HCT116 (cell line): ENCODE measurements at regions of chr6 and their contacts with region 1.

Region 1: GRCh38 chr6:158072083-158072721 is 90.5 kb downstream of the SYNJ2 start:
- DNase-seq: no peak
- ATAC-seq: peak; percentile 44
- H3K4me3 ChIP-seq: no peak overlapping the region
- H3K27ac ChIP-seq: no peak overlapping the region
- H3K4me1 ChIP-seq: peaks cover 26 to 43% of the 10 kb centered on the region in 2 experiments
- H3K27me3 ChIP-seq: no peaks in the 10 kb centered on the region
- CTCF ChIP-seq: peak; percentile 75 to 87 (median 87)
- POLR2A ChIP-seq: no peak
- RAD21 ChIP-seq: peak; percentile 98

Region 2: GRCh38 chr6:157644043-157644810 is 428.0 kb before region 1 on chr6:
- CTCF ChIA-PET with region 1: no interaction called
- POLR2A ChIA-PET with region 1: no interaction called
- RAD21 ChIA-PET with region 1: no interaction called
- intact Hi-C with region 1: loop called (anchors 10 kb)
- DNase-seq: no peak
- ATAC-seq: peak; percentile 78
- H3K4me3 ChIP-seq: no peak overlapping the region
- H3K27ac ChIP-seq: no peak overlapping the region
- H3K4me1 ChIP-seq: peaks cover 7 to 9% of the 10 kb centered on the region in 2 experiments; a peak in 3 of 4 replicates
- H3K27me3 ChIP-seq: no peaks in the 10 kb centered on the region
- CTCF ChIP-seq: peak; percentile 31 to 49 (median 42); a peak in 5 of 6 replicates
- POLR2A ChIP-seq: no peak
- RAD21 ChIP-seq: peak; percentile 75

Region 3: GRCh38 chr6:157764178-157765033 is 307.8 kb before region 1 on chr6:
- CTCF ChIA-PET with region 1: interaction called, 4 read pairs
- POLR2A ChIA-PET with region 1: no interaction called
- RAD21 ChIA-PET with region 1: no interaction called
- intact Hi-C with region 1: loop called (anchors 2 kb)
- DNase-seq: peak; percentile 91
- ATAC-seq: peak; percentile 75
- H3K4me3 ChIP-seq: peak overlapping the region in 1 of 2 experiments; percentile 17; a peak in 2 of 4 replicates
- H3K27ac ChIP-seq: peak overlapping the region; percentile 43
- H3K4me1 ChIP-seq: peaks cover 48 to 63% of the 10 kb centered on the region in 2 experiments
- H3K27me3 ChIP-seq: no peaks in the 10 kb centered on the region
- CTCF ChIP-seq: no peak
- POLR2A ChIP-seq: no peak
- RAD21 ChIP-seq: no peak

Region 4: GRCh38 chr6:157928428-157928827 is 143.8 kb before region 1 on chr6:
- CTCF ChIA-PET with region 1: no interaction called
- POLR2A ChIA-PET with region 1: no interaction called
- RAD21 ChIA-PET with region 1: no interaction called
- intact Hi-C with region 1: no loop called
- DNase-seq: no peak
- ATAC-seq: no peak
- H3K4me3 ChIP-seq: no peak overlapping the region
- H3K27ac ChIP-seq: no peak overlapping the region
- H3K4me1 ChIP-seq: no peaks in the 10 kb centered on the region
- H3K27me3 ChIP-seq: no peaks in the 10 kb centered on the region
- CTCF ChIP-seq: no peak
- POLR2A ChIP-seq: no peak
- RAD21 ChIP-seq: no peak

Region 5: DNA sequence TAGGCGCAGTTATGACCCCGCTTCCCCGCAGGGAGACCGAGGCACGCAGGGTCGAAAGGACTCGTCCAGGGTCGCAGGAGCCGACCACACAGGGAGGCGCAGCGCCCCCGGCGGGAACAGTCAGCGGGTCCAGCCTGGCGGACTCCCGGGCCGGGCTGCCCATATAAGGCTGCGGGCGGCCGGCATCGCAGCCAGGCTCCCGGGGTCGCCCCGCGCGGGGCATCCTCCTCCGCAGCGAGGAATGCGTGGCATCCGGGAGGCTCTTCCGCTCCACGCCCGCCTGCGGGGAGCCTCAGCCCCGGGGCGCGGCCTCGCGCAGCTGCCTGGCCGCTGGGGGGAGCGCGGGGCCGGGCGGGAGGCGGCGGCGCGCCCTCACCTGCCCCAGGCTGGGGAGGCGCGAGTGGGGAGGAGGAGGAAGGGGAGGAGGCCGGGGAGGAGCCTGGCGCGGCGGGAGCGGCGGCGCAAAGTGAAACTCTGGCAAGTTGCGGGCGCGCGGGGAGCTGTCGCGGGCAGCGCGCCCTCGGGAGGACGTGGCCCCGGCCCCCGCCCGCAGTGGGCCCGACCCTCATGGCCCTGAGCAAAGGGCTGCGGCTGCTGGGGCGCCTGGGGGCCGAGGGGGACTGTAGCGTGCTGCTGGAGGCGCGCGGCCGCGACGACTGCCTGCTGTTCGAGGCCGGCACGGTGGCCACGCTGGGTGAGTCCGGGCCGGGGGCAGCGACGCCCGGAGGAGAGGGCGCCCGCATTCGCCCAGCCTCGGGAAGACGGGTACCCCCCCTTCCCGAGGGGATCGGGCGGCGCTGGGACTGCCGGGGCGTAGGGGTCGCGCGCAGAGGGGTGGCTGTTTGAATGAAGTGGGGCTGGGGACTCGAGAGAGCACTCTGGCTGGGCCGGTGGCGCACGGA is 90.6 kb before region 1 on chr6 and contains the start of gene SYNJ2:
- CTCF ChIA-PET with region 1: interaction called, 5 read pairs
- POLR2A ChIA-PET with region 1: no interaction called
- RAD21 ChIA-PET with region 1: interaction called in 1 of 2 experiments, 3 read pairs
- intact Hi-C with region 1: loop called (anchors 1 kb)
- DNase-seq: no peak
- ATAC-seq: peak; percentile 94
- H3K4me3 ChIP-seq: peak within 1 kb of the TSS; percentile 63 to 76
- H3K27ac ChIP-seq: peak within 1 kb of the TSS; percentile 55; the same call in 1 of the 2 replicates
- H3K4me1 ChIP-seq: peaks cover 15 to 47% of the 10 kb centered on the region in 2 experiments; a peak in 3 of 4 replicates
- H3K27me3 ChIP-seq: no peaks in the 10 kb centered on the region
- CTCF ChIP-seq: peak; percentile 25 to 56 (median 48); a peak in 4 of 6 replicates
- POLR2A ChIP-seq: no peak
- RAD21 ChIP-seq: peak; percentile 46; the same call in 1 of the 2 replicates
- total RNA-seq, gene SYNJ2: 23.9 TPM

Region 6: DNA sequence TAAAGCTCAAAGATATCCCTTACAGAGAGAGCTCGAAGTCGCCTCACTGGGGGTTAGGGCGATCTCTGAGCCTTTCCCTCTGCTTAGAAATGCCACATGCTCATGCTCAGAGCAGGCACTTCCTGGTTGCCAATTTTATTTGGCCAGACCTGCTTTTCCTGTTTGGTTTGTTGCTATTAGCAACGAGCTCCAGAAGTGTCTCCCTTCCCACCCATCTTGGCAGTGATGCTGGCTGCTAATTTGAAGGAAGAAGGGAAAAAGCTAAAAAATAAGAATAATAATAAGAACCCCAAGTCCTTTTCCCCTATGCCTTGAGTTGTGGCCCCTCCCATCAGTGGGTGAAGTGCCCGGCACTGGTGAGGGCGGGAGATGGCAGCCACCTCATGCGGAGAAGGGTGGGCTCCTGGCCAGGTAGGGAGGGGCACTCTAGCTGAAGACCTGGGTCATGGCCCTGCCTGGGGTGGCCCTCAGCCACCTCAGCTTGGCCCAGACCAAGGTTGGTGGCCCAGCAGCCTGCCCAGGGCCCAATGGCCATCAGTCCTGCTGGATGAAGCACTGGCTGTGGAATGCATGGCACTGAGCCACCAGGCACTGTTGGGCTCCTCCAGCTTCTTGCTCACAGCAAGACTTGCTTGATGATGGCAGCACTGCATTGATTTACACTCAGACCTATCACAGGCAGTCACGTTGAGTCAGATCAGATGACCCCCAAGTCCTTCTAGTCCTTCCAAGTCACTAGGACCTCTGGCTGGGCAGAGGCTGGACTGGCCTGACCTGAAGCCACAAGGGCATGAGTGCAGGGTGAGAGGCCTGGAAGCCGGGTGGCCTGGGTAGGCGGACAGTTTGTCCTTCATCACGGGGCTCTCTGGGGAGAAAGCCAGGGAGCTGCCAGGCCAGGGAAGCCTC is 11.5 kb before region 1 on chr6:
- CTCF ChIA-PET with region 1: interaction called, 18 read pairs
- POLR2A ChIA-PET with region 1: interaction called, 6 read pairs
- RAD21 ChIA-PET with region 1: no interaction called
- intact Hi-C with region 1: no loop called
- DNase-seq: no peak
- ATAC-seq: peak; percentile 65
- H3K4me3 ChIP-seq: peak overlapping the region in 1 of 2 experiments; percentile 23; a peak in 2 of 4 replicates
- H3K27ac ChIP-seq: peak overlapping the region; percentile 85
- H3K4me1 ChIP-seq: peaks cover 45 to 63% of the 10 kb centered on the region in 2 experiments
- H3K27me3 ChIP-seq: no peaks in the 10 kb centered on the region
- CTCF ChIP-seq: no peak
- POLR2A ChIP-seq: no peak
- RAD21 ChIP-seq: no peak; the same call in 1 of the 2 replicates